HepG2 (cell line): ENCODE measurements at regions of chr11 and their contacts with region 1.

Region 1: GRCh38 chr11:82315093-82315492 is 418.6 kb downstream of the FAM181B start:
- DNase-seq: peak; percentile 23
- ATAC-seq: peak; percentile 97
- H3K4me3 ChIP-seq: no peak overlapping the region
- H3K27ac ChIP-seq: no peak overlapping the region
- H3K4me1 ChIP-seq: no peaks in the 10 kb centered on the region
- H3K27me3 ChIP-seq: no peaks in the 10 kb centered on the region
- CTCF ChIP-seq: peak; percentile 73
- EP300 ChIP-seq: no peak
- POLR2A ChIP-seq: no peak
- RAD21 ChIP-seq: peak; percentile 33; the same call in 1 of the 2 replicates

Region 2: DNA sequence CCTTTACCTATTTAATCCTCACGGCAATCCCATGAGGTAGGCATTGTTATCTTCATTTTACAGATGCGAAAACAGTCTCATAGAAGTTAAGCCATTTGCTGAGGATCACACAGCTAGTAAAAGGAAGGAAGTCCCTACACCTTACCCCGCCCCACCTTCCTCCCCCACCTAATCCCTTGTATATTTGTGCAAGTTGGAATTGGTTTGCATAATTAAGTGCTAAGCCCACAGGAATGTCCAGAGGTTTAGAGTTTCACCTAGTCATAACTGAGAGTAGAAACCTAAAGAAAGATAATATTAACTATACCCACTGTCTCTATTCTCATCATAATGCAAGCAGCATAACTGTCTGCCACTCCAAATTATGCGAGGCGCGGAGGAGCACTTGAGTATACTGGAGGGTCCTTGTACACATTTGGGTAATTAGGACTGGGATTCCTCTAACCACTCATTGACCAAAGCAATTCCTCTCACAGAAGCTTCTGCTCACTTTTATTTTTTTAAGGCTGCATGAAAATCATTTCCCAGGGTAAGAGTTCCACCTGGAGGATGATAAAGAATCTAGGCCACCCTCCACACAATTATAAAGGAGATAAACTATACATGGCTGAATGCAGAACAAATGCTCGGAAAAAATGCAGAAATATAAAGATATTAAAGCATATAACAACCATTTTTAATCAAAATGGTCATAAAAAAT is 218.7 kb after region 1 on chr11:
- CTCF ChIA-PET with region 1: no interaction called
- POLR2A ChIA-PET with region 1: no interaction called
- in situ Hi-C with region 1: no loop called
- intact Hi-C with region 1: loop called (anchors 5 kb)
- DNase-seq: no peak
- ATAC-seq: no peak
- H3K4me3 ChIP-seq: no peak overlapping the region
- H3K27ac ChIP-seq: no peak overlapping the region
- H3K4me1 ChIP-seq: no peaks in the 10 kb centered on the region
- H3K27me3 ChIP-seq: no peaks in the 10 kb centered on the region; a peak in 1 of 5 replicates
- CTCF ChIP-seq: no peak
- EP300 ChIP-seq: no peak
- POLR2A ChIP-seq: no peak
- RAD21 ChIP-seq: no peak